ENCODE measurements at regions of chr6 and their contacts with region 1.

Region 1: GRCh38 chr6:151014404-151015100 is 149.1 kb downstream of the MTHFD1L start:
- DNase-seq: peak; percentile 62
- ATAC-seq: peak; percentile 81

Region 2: DNA sequence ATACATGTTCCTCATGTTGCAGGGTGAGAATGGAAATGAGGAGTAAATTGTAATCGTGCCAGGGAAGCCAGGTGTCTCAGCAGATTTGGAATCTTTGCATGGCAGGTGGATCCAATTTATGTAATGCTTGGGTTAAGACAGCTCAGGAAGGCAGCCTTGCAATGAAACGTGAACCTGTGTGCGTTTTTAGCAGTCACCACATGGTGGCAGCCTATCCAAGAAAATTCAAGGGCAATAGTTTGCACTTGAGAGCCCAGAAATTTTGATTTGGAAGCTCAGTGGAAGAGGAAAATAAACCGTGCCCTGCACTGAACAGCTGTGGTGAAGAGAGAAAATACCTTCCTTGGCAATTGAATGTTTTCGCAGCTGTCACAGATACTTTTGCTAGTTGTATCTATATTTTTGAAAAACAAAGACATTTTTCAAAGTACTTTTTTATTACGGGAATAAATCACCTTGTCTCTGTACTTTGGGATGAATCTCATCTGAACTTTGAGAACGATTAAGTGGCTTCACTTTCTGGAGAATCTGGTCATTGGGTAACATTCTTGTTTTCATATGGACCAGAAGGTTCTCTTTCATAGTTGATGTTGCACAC is 122.6 kb before region 1 on chr6:
- intact Hi-C with region 1: loop called (anchors 5 kb)
- DNase-seq: peak; percentile 64
- ATAC-seq: peak; percentile 84

Region 3: DNA sequence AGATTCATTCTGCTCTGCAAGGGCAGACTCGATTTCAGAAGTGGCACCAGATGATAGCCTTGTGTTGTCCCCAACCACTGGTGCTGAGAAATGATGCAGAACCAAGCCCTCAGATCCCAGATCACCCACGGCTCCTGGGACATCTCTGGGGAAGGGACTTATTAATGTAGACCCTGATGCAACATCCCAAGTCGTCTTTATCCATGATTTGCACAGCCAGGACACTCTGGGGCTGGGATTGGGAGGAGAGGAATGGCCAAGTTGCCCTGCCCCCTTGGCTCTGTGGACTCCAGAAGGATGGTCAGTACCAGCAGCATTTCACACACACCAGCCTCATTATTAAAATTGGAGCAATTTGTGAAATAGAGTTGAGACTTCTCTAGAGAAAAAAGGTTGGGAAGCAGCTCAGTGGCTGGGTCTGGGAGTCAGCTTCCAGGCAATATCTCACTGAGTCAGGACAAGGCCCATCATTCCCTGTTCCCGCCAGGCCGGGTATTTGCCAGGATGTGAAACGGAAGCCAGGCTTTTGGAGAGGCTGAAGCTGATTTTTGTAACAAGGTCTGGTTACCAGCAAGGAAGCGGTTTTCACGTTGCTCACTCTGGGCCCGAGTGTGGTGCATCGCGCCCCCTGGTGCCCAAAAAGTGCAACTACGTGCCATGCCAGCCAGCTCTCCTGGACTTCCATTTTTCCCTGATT is 309.4 kb after region 1 on chr6:
- intact Hi-C with region 1: loop called (anchors 5 kb)
- DNase-seq: peak; percentile 87
- ATAC-seq: peak; percentile 93

Measured in left ventricle myocardium superior (tissue), 1 donor.